Activated CD8-positive, alpha-beta memory T cell treated with anti-CD3 and anti-CD28 coated beads, Interleukin-2, amount 10 ng/mL, durations not matched to agents 7 days and 5 days (primary cell): ENCODE measurements at regions of chr3 and their contacts with region 1.

Region 1: GRCh38 chr3:15405448-15406050 is 21.8 kb downstream of the METTL6 start:
- DNase-seq: no peak
- ATAC-seq: peak; percentile 64
- H3K4me3 Mint-ChIP-seq: no peak overlapping the region
- H3K27ac Mint-ChIP-seq: no peak overlapping the region
- H3K4me1 Mint-ChIP-seq: peaks cover 12% of the 10 kb centered on the region
- H3K27me3 Mint-ChIP-seq: no peaks in the 10 kb centered on the region

Region 2: DNA sequence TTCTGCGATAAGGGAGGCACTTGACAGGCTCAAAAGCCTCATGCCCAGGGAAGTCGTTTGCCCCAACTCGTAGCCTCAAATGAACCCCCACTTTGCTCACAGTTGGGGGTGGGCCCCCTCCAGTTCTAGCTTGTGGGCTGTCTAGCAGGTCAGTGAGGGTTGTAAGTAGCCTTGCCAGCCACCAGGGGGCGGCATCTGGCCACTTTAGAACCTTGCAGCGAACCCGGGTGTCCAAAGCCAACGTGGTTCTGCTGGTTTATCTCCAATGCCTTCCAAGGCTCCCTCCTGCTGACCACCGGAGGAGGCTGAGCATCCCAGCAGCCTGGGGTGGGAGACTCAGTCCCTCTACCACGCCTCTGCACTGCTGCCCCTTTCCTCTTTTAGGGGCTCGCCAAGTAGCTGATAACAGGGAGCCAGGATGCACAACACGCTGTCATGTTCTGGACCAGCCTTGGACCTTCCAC is 297.4 kb before region 1 on chr3:
- CTCF ChIA-PET with region 1: interaction called, 20 read pairs
- DNase-seq: peak; percentile 81
- ATAC-seq: peak; percentile 95
- H3K4me3 Mint-ChIP-seq: no peak overlapping the region
- H3K27ac Mint-ChIP-seq: no peak overlapping the region
- H3K4me1 Mint-ChIP-seq: peaks cover 3% of the 10 kb centered on the region
- H3K27me3 Mint-ChIP-seq: peaks cover 16% of the 10 kb centered on the region

Region 3: GRCh38 chr3:15199493-15200105 is 205.9 kb before region 1 on chr3:
- CTCF ChIA-PET with region 1: interaction called, 45 read pairs
- DNase-seq: no peak
- ATAC-seq: no peak
- H3K4me3 Mint-ChIP-seq: no peak overlapping the region
- H3K27ac Mint-ChIP-seq: no peak overlapping the region
- H3K4me1 Mint-ChIP-seq: peaks cover 20% of the 10 kb centered on the region
- H3K27me3 Mint-ChIP-seq: peaks cover 12% of the 10 kb centered on the region

Region 4: DNA sequence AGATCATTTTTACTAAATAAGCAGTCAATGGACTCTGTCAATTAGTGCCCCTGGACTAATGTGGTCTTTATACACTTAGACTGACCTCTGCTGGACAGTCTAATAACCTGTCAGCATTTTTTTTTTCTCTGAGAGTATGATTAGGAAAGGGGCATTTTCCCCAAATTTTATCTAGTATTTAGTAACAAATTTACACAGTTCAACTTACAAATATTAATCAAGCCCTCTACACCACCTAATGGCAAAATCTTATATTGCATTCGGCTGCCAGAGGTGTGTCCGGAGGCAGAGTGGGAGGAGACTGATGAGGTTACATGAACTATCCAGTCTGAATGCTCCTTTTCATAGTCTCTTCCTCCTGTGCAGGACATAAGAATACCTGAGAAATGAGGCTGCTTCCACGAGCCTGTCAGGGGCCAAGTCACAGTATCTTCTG is 152.0 kb after region 1 on chr3:
- CTCF ChIA-PET with region 1: interaction called, 29 read pairs
- DNase-seq: peak; percentile 86
- ATAC-seq: peak; percentile 97
- H3K4me3 Mint-ChIP-seq: no peak overlapping the region
- H3K27ac Mint-ChIP-seq: peak overlapping the region; percentile 66
- H3K4me1 Mint-ChIP-seq: peaks cover 21% of the 10 kb centered on the region
- H3K27me3 Mint-ChIP-seq: no peaks in the 10 kb centered on the region